A549 (cell line): ENCODE measurements at regions of chr17 and their contacts with region 1.

Region 1: DNA sequence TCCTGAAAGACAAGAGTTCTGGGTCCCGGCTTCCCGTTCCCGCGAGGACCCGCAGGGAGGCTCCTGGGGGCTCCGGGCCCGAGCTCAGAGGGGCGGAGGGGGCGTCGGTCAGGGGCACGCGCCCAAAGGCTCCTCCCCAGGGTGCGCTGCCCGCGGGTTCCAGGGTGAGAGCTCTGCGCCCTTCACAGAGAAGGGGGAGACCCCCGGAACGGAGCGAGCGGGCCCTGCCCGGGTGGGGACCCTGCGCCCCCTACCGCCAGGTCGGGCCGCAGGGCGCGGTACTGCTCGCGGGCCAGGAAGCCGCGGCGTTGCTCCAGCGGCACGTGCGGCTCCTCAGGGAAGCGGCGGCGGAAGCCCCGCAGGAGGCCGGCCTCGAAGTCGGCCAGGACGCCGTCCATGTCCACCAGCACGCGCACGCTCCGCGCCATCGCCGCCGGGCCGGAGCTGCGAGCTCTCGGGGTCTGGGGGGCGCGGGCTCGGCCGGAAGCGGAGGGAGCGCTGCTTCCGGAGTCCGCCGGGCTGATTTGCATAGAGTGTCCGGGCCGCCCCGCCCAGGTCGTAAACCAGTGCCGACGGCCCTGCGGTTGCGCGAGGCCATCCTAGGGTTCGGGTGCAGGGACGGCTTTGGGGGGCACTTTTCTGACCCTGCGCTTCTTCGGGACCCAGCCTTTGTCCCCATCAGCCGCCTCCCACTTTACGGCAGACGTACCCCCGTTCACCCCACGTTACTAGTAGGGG is at the start of gene NT5C:
- DNase-seq: peak; percentile 85 to 91
- ATAC-seq: peak; percentile 83 to 86
- H3K4me3 ChIP-seq: peak within 1 kb of the TSS; percentile 89
- H3K27ac ChIP-seq: peak within 1 kb of the TSS; percentile 97
- H3K4me1 ChIP-seq: peaks cover 40% of the 10 kb centered on the region
- CTCF ChIP-seq: peak; percentile 95
- EP300 ChIP-seq: no peak
- POLR2A ChIP-seq: peak; percentile 72
- RAD21 ChIP-seq: peak; percentile 58 to 77
- polyA plus RNA-seq, gene NT5C: 54.5 and 73.7 TPM in 2 replicates

Region 2: DNA sequence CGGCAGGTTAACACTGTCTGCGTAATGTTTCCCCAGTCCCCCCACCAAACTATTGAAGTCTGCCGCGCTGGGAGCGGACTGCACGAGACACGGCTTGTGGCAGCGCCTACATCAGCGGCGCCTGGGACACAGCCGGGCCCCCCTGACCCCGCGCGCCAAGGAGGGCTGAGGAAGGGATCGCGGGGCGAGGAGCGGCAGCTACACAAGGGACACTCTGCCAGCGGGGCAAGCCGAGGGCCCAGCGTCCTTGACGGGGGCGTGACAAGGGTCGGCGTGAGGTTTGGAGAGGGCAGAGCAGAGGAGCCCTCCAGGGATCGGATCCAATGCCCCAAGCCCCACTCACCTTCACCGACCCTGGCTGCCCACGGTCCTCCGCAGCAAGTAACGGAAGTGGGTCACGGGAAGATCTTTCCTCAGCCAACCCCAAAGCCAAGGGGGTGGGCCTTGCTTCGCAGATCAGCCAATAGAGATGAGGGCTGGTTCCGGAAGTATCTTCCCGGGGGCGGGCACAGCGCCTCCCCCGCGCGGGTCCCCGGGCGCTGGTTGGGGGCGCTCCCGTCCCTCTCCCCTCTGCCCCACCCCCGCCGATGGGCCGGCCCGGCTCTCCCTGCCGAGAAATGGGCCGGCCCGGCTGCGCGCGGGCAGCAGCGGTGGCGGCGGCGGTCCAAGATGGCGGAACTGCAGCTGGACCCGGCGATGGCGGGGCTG is 84.7 kb before region 1 on chr17 and contains the starts of genes ATP5PD and KCTD2:
- CTCF ChIA-PET with region 1: interaction called, 3,429 read pairs
- POLR2A ChIA-PET with region 1: no interaction called
- DNase-seq: peak; percentile 98 to 99
- ATAC-seq: peak; percentile 98 to 99
- H3K4me3 ChIP-seq: peak within 1 kb of the TSS; percentile 94
- H3K27ac ChIP-seq: peak within 1 kb of the TSS; percentile 93 to 97
- H3K4me1 ChIP-seq: peaks cover 16% of the 10 kb centered on the region
- CTCF ChIP-seq: no peak
- EP300 ChIP-seq: no peak
- POLR2A ChIP-seq: peak; percentile 90
- RAD21 ChIP-seq: 0 out of 5 replicates have a peak, but pooled peaks of 1 of the 2 experiments have one; percentile 21
- polyA plus RNA-seq, gene ATP5PD: 314 and 333 TPM in 2 replicates
- polyA plus RNA-seq, gene KCTD2: 31.3 and 34.1 TPM in 2 replicates

Region 3: DNA sequence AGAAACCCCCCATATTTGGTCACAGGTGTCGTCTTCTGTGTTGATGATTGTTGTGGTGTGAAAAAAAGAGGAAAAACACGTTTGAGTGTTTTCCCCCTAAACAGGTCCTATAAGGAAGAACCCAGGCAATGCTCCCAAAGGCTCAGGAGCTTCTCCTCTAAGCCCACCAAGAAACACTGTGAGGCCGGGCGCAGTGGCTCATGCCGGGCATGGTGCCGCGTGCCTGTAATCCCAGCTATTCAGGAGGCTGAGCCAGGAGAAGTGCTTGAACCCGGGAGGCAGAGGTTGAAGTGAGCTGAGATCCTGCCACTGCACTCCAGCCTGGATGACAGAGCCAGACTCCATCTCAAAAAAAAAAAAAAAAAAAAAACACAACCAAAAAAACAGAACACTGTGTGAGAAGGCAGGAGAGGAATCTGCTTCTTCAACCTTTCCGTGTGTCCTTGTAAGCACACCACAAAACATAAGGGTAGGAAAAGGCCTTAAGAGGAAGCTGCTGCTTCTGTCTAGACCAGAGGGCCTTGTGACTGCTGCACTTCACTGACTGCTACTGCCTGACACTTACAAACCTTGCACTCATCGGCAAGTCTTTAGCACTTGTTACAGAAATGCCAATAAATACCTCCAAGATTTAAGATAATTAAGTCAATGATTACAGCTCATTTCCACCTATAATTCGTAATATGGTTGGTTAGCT is 13.5 kb after region 1 on chr17:
- CTCF ChIA-PET with region 1: interaction called, 3,429 read pairs
- POLR2A ChIA-PET with region 1: interaction called, 16 read pairs
- DNase-seq: no peak
- ATAC-seq: no peak
- H3K4me3 ChIP-seq: no peak overlapping the region
- H3K27ac ChIP-seq: no peak overlapping the region
- H3K4me1 ChIP-seq: peaks cover 25% of the 10 kb centered on the region
- CTCF ChIP-seq: no peak
- EP300 ChIP-seq: no peak
- POLR2A ChIP-seq: no peak
- RAD21 ChIP-seq: no peak

Region 4: GRCh38 chr17:75154195-75155106 is 23.0 kb after region 1 on chr17 and contains the start of gene JPT1:
- CTCF ChIA-PET with region 1: interaction called, 3,429 read pairs
- POLR2A ChIA-PET with region 1: interaction called, 9 read pairs
- DNase-seq: peak; percentile 99 to 100
- ATAC-seq: peak; percentile 85 to 94
- H3K4me3 ChIP-seq: peak within 1 kb of the TSS; percentile 78
- H3K27ac ChIP-seq: peak within 1 kb of the TSS; percentile 85 to 95
- H3K4me1 ChIP-seq: peaks cover 54% of the 10 kb centered on the region
- CTCF ChIP-seq: no peak
- EP300 ChIP-seq: no peak
- POLR2A ChIP-seq: peak; percentile 100
- RAD21 ChIP-seq: no peak
- polyA plus RNA-seq, gene JPT1: 141 and 196 TPM in 2 replicates